Right cardiac atrium (tissue), 5 donors: ENCODE measurements at regions of chr10 and their contacts with region 1.

Region 1: GRCh38 chr10:103685880-103686669 is 169.3 kb downstream of the SH3PXD2A start:
- DNase-seq: peak; percentile 72 to 91 (median 90)
- ATAC-seq: peak; percentile 76 to 78
- H3K4me3 ChIP-seq: no peak overlapping the region
- H3K27ac ChIP-seq: no peak overlapping the region
- H3K4me1 ChIP-seq: peaks cover 2% of the 10 kb centered on the region
- H3K27me3 ChIP-seq: no peaks in the 10 kb centered on the region

Region 2: DNA sequence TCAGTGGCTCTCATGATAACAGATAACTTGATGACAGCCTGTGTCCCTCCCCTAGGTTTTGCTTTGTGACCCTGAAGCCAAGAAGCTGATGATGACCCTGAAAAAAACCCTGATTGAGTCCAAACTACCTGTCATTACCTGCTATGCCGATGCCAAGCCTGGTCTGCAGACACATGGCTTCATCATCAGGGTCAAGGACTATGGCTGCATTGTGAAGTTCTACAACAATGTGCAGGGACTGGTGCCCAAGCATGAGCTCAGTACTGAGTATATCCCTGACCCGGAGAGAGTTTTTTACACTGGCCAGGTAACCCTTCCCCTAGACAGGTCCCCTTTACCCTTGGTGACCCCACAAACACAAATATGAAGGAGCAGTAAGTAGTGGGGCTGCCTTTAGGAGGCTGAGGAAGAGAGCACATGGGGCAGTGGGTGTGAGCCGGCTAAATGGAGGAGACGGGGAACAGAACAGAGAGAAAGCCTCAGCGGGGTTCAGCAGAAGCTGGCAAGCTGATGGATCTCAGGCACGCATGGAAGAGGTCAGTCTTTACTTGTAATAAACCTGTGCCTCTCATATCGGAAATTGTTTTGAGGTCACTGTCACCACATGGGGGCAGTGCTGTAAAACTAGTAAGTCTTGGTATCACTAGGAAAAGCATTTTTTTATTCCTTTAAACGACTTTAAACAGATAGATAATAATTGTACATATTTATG is 269.5 kb before region 1 on chr10:
- intact Hi-C with region 1: loop called in 1 of 4 experiments (anchors 10 kb)
- DNase-seq: peak in 2 of 3 donors; percentile 53 to 81
- ATAC-seq: peak; percentile 41 to 51
- H3K4me3 ChIP-seq: no peak overlapping the region
- H3K27ac ChIP-seq: no peak overlapping the region
- H3K4me1 ChIP-seq: no peaks in the 10 kb centered on the region
- H3K27me3 ChIP-seq: no peaks in the 10 kb centered on the region

Region 3: DNA sequence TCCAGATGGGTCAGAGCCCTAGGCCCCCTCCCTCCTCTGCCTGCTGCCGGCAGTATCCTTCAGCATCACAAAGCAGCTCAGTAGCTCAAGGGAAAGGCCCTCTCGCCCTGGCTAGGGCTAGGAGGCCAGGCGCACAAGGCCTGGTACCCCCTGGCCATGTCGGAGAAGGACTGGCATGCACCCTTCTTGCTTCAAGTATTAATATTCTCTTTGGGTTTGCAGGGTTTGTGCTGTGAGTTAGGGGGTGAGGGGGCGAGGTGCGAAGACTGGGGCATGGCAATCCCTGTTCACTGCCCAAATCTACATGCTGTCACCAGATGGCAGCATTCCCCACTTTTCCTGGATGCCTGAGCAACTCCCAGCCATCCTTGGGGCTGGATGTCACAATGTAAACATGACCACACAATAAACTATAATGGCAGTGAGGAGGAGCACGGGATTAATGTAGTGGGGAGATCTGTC is 87.4 kb before region 1 on chr10:
- intact Hi-C with region 1: loop called in 3 of 4 experiments (anchors 2 to 5 kb)
- DNase-seq: peak; percentile 51 to 78 (median 67)
- ATAC-seq: peak; percentile 52 to 63
- H3K4me3 ChIP-seq: no peak overlapping the region
- H3K27ac ChIP-seq: no peak overlapping the region
- H3K4me1 ChIP-seq: no peaks in the 10 kb centered on the region
- H3K27me3 ChIP-seq: no peaks in the 10 kb centered on the region

Region 4: DNA sequence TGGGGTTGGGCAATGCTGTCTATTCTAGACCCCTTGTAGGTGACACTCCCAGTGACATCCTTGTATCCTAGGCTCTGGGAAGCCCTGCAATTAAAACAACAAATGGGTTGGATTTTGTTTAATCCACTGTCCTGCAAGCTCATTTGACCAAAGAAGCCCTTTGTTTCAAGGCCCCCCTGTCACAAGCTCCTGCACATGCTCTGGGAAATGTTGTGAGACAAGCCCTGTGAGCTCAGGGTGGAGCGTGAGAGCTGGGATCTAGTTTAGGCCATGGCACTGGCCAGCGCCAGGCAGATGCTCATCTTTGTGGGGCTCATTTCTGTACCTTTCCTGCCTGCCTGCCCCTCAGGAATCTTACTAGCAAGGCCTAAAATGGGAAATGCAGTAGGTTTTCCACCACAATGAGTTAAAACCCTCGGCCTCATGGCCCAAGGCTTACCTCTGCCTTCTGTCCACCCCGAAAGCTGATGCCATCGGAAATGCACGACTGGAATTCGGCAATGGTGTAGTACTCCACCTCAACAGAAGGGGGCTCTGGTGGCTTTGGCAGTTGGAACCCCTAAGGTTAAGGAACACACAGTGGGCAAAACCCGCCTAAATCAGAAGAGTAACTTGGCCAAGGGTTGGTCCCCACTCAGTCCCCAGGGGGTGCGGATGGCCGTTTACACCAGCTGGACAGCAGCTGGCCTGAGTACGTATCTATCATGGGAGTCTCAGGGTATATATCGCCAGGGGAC is 80.5 kb before region 1 on chr10:
- intact Hi-C with region 1: loop called in 2 of 4 experiments (anchors 2 to 5 kb)
- DNase-seq: peak; percentile 50 to 70 (median 68)
- ATAC-seq: peak in 1 of 2 donors; percentile 52
- H3K4me3 ChIP-seq: no peak overlapping the region
- H3K27ac ChIP-seq: no peak overlapping the region
- H3K4me1 ChIP-seq: no peaks in the 10 kb centered on the region
- H3K27me3 ChIP-seq: no peaks in the 10 kb centered on the region